ENCODE measurements at regions of chr10 and their contacts with region 1.

Region 1: DNA sequence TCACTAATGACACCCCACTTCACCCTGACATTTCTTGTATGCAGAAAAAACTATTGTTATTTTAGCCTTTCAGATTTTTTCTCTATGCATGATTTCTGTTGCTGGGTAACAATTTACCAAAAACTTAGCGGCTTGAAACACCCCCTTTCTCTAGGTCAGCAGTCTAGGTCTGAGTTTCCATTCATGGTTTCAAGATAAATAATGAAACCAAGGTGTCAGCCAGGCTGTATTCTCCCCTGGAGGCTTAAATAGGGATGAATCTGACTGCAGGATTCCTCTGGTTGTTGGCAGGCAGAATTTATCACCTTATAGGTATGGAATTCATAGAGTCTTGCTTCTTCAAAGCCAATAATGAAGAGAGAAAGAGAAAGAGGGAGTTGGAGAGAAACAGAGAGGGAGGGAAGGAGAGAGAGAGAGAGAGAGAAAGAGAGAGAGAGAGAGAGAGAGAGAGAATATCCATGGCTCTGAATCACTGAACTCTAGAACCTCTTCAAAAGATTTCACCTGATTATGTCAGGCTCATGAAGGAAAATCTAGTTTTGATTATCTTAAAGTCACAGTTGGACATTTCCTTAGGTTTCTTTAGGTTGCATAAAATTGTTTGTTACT is 1224.6 kb upstream of the LRRTM3 start:
- DNase-seq: no peak
- H3K4me3 ChIP-seq: no peak overlapping the region
- H3K27ac ChIP-seq: no peak overlapping the region
- H3K4me1 ChIP-seq: no peaks in the 10 kb centered on the region
- H3K27me3 ChIP-seq: no peaks in the 10 kb centered on the region
- CTCF ChIP-seq: no peak
- EP300 ChIP-seq: no peak
- POLR2A ChIP-seq: no peak

Region 2: DNA sequence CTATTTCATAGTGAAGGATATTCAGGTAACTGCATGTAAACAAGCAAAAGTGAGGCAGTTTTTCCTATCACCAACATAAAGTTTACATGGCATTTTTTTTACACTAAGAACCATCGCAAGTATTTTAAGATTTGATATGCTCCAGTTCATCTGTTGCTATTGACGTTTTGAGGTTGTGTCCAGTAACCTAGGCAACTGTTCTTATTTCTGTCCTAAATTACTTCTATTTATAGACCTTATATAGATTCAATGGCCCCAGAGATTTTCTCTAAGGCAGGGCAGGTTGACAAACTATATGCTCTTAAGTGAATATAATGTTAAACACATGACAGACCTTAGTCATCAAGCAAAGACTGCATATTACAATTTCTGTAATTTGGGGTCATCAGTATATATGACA is 394.3 kb after region 1 on chr10:
- intact Hi-C with region 1: loop called in 1 of 4 experiments (anchors 10 kb)
- DNase-seq: no peak
- H3K4me3 ChIP-seq: no peak overlapping the region
- H3K27ac ChIP-seq: no peak overlapping the region
- H3K4me1 ChIP-seq: no peaks in the 10 kb centered on the region
- H3K27me3 ChIP-seq: no peaks in the 10 kb centered on the region
- CTCF ChIP-seq: no peak
- EP300 ChIP-seq: no peak
- POLR2A ChIP-seq: no peak